Left ventricle myocardium superior (tissue), 1 donor: ENCODE measurements at regions of chr1 and their contacts with region 1.

Region 1: DNA sequence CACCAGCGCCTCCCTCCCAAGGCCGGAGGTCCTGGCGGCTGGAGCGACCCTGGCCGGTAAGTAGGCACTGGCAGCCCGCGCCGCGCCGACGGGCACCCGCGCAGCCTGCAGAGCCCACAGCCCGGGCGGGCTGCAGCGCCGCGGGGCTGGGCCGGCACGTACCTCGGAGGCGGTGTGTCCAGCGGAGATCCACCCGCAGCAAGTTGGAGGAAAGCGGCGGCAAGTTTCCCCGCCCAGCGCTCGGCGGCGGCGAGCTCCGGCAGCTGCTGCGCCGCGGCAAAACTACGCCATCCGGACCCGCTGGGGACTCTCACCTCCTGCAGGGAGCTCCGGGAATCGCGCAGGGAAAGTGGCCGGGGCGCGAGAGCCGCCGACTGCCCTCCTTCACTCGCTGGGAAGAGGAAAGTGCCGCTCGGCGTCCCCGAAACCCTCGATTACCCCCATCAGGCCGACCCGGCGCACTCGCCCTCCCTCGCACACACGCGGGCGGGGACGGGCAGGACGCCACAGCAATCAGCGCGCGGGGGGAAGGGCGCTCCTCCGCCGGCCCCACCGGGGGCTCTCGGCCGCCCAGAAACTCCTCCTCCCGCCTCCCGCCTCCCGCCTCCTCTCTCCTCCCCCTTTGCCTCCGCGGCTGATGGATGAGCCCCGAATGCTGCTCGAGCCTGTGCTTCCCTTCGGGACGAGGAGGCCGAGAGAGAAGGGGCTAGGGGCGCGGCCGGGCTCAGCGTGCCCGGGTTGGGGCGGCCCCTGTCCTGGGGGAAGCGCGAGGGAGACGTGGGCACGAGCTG is at the start of gene TGFBR3:
- DNase-seq: peak; percentile 97
- ATAC-seq: peak; percentile 96
- total RNA-seq, gene TGFBR3: 26.2 TPM

Region 2: GRCh38 chr1:91827087-91827458 is 58.8 kb before region 1 on chr1:
- intact Hi-C with region 1: loop called (anchors 10 kb)
- DNase-seq: peak; percentile 81
- ATAC-seq: peak; percentile 84

Region 3: GRCh38 chr1:91997607-91998195 is 111.8 kb after region 1 on chr1:
- intact Hi-C with region 1: no loop called
- DNase-seq: no peak
- ATAC-seq: no peak

Region 4: GRCh38 chr1:92376345-92376744 is 490.4 kb after region 1 on chr1:
- intact Hi-C with region 1: no loop called
- DNase-seq: no peak
- ATAC-seq: no peak